Endothelial cell of umbilical vein (primary cell): ENCODE measurements at regions of chr15 and their contacts with region 1.

Region 1: GRCh38 chr15:94670438-94671034 is 439.2 kb downstream of the MCTP2 start:
- DNase-seq: peak; percentile 84
- H3K4me3 ChIP-seq: no peak overlapping the region
- H3K27ac ChIP-seq: peak overlapping the region; percentile 72
- H3K4me1 ChIP-seq: peaks cover 33% of the 10 kb centered on the region
- H3K27me3 ChIP-seq: no peaks in the 10 kb centered on the region
- CTCF ChIP-seq: peak; percentile 38 to 45
- POLR2A ChIP-seq: no peak

Region 2: GRCh38 chr15:94272251-94272898 is 398.2 kb before region 1 on chr15:
- CTCF ChIA-PET with region 1: no interaction called
- POLR2A ChIA-PET with region 1: no interaction called
- dilution Hi-C with region 1: no loop called
- intact Hi-C with region 1: no loop called
- DNase-seq: no peak
- H3K4me3 ChIP-seq: no peak overlapping the region
- H3K27ac ChIP-seq: no peak overlapping the region
- H3K4me1 ChIP-seq: no peaks in the 10 kb centered on the region
- H3K27me3 ChIP-seq: no peaks in the 10 kb centered on the region
- CTCF ChIP-seq: no peak
- POLR2A ChIP-seq: no peak

Region 3: GRCh38 chr15:94412979-94413746 is 257.4 kb before region 1 on chr15:
- CTCF ChIA-PET with region 1: interaction called, 5 read pairs
- POLR2A ChIA-PET with region 1: no interaction called
- dilution Hi-C with region 1: loop called (anchors 25 kb)
- intact Hi-C with region 1: loop called (anchors 5 kb)
- DNase-seq: peak; percentile 47
- H3K4me3 ChIP-seq: no peak overlapping the region
- H3K27ac ChIP-seq: no peak overlapping the region
- H3K4me1 ChIP-seq: no peaks in the 10 kb centered on the region
- H3K27me3 ChIP-seq: no peaks in the 10 kb centered on the region
- CTCF ChIP-seq: peak in 1 of 2 donors; percentile 20
- POLR2A ChIP-seq: no peak

Region 4: DNA sequence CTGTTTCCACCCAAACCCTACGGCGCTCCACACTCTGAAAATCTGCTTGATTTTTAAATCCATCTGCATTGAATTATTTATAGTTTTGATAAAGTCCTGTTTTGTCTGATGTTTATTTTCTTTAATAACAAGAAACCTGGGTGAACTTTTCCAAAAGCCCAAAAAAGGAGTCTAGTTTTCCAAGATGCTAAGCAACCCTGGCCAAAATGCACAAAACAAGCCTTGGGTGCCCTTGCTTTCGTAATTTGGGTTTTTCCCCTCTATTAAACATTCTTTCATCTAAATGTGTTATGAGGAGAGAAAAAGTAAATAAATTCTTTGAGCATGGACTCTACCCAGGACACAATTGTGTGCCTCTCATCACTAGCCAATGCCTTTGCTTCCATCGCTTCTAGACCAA is 29.7 kb after region 1 on chr15:
- CTCF ChIA-PET with region 1: interaction called, 12 read pairs
- POLR2A ChIA-PET with region 1: interaction called, 3 read pairs
- dilution Hi-C with region 1: no loop called
- intact Hi-C with region 1: loop called (anchors 1 kb)
- DNase-seq: no peak
- H3K4me3 ChIP-seq: no peak overlapping the region
- H3K27ac ChIP-seq: no peak overlapping the region
- H3K4me1 ChIP-seq: peaks cover 44% of the 10 kb centered on the region
- H3K27me3 ChIP-seq: no peaks in the 10 kb centered on the region
- CTCF ChIP-seq: no peak
- POLR2A ChIP-seq: no peak

Region 5: DNA sequence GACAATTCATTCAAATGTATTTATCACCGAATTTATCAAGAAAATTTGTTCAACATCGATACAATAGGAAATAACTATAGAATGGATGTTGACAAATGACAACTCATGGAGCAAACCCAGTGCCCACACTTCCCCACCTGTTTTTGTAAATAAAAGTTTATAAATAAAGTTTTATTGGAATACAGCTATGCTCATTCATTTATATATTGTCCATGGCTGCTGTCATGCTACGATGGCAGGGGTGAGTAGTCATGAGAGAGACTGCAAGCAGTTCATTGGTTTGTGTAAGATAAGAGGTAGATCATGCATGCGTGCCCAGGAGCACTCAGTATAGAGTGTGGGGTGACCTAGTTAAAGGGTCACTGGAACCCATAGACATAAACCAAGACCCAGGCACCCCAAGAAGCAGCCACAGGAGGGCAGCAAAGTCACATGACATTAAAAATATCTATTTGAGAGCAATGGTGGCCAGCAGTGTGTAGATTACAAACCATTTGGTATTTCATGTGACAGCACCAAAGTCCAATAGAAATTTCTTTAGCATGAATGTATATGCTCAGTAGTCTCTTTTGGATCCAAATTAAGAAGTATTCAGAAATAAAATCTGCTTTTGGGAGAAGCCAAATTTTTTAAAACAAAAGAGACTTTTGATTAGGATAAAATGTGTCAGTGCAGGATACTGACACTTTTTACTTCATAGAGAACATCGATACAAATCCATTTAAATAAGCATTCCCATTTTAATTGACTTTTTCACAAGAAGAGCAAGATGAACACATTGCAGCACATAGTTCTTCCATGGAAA is 355.6 kb after region 1 on chr15:
- CTCF ChIA-PET with region 1: interaction called, 160 read pairs
- POLR2A ChIA-PET with region 1: interaction called, 4 read pairs
- dilution Hi-C with region 1: no loop called
- intact Hi-C with region 1: loop called (anchors 1 kb)
- DNase-seq: peak; percentile 78
- H3K4me3 ChIP-seq: no peak overlapping the region
- H3K27ac ChIP-seq: no peak overlapping the region
- H3K4me1 ChIP-seq: peaks cover 2% of the 10 kb centered on the region
- H3K27me3 ChIP-seq: no peaks in the 10 kb centered on the region
- CTCF ChIP-seq: peak; percentile 62 to 76
- POLR2A ChIP-seq: no peak

Region 6: DNA sequence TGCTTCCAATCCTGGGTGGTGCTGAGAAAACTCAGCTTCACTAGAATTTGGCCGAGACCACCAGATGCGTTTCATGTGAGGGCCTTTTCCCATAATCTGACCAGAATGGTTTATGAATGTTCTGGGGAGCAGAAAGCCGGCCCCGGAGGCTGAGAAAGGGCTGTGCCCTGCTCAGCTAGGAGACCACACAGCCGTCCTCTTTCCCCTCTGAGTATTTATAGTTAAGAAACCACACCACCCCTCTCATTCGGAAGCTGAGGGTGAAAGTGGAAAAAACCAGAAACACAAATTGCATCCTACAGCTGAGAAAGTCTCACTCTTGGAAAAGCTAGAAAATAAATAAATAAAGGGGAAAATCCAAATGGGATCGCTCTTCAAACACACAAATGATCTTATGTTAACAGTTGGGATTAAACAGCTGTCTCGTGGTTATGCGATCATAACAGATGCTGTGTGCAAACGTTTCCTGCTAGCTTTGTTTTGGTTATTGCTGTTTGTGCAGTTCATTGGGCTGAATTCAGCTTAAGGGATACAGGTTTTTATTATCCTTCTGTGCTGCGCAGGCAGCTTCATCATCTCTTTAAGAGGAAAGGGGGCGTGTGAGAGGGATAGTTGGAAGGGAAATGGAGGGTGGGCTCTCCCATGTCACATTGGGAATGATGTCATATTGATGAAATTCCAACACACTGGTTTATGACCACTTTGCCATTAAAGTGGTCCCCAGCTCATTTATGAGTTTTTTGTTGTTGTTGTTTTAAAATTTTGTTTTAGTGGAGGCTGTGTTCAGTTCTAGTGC is 633.8 kb after region 1 on chr15:
- CTCF ChIA-PET with region 1: interaction called, 7 read pairs
- POLR2A ChIA-PET with region 1: no interaction called
- dilution Hi-C with region 1: no loop called
- intact Hi-C with region 1: loop called (anchors 1 kb)
- DNase-seq: peak; percentile 98
- H3K4me3 ChIP-seq: no peak overlapping the region
- H3K27ac ChIP-seq: peak overlapping the region; percentile 97
- H3K4me1 ChIP-seq: peaks cover 52% of the 10 kb centered on the region
- H3K27me3 ChIP-seq: no peaks in the 10 kb centered on the region
- CTCF ChIP-seq: no peak
- POLR2A ChIP-seq: no peak

Region 7: GRCh38 chr15:95557226-95558046 is 886.9 kb after region 1 on chr15:
- CTCF ChIA-PET with region 1: interaction called, 4 read pairs
- POLR2A ChIA-PET with region 1: no interaction called
- dilution Hi-C with region 1: no loop called
- intact Hi-C with region 1: loop called (anchors 2 kb)
- DNase-seq: peak; percentile 96
- H3K4me3 ChIP-seq: peak overlapping the region in 1 of 3 experiments; percentile 10
- H3K27ac ChIP-seq: peak overlapping the region; percentile 100
- H3K4me1 ChIP-seq: peaks cover 39% of the 10 kb centered on the region
- H3K27me3 ChIP-seq: no peaks in the 10 kb centered on the region
- CTCF ChIP-seq: no peak
- POLR2A ChIP-seq: no peak

Region 8: DNA sequence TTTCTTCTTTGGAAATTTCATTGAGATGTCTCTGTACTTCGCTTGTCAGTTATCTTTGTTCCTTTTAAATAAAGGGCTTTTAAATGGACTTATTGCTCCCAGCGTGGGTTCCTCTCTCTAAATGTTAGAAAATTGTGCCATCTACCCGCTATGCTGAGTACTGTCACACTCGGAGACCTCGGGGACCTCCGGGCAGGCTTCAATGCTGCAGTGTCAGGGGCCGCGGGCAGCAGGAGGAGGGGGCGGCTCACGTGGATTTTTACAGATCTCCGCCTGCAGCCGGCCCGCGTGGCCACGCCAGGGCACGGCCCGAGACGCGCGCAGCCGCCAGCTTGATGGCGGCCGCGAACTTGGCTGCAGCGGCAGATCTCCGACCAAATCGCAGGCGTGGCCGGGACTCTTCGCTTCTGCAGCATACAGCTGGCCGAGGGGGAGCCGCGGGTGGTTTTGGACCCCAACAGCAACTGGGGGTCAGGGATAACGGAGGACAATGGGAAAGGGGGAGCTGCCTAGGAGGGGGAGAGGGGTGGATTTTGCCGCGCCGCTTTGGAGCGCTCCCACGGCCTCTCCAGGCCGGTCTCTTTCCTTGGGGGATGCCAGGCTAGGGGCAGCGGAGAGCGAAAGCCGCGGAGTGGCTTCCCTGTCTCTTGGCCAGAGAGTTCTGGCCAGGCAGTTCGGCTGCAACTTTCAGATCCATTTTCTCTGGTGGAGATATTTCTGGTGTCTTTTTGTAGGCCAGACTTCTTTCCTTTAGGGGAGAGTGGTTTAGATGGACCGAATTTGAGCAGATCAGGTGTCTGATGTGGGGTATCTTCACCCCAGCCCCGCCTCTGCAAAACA is 1675.2 kb after region 1 on chr15:
- CTCF ChIA-PET with region 1: interaction called, 8 read pairs
- POLR2A ChIA-PET with region 1: no interaction called
- dilution Hi-C with region 1: no loop called
- intact Hi-C with region 1: loop called (anchors 2 kb)
- DNase-seq: peak; percentile 86
- H3K4me3 ChIP-seq: peak overlapping the region; percentile 16 to 99 (median 74)
- H3K27ac ChIP-seq: peak overlapping the region; percentile 87
- H3K4me1 ChIP-seq: peaks cover 83% of the 10 kb centered on the region
- H3K27me3 ChIP-seq: no peaks in the 10 kb centered on the region
- CTCF ChIP-seq: peak; percentile 22 to 33
- POLR2A ChIP-seq: no peak